Activated CD8-positive, alpha-beta memory T cell treated with anti-CD3 and anti-CD28 coated beads, Interleukin-2, amount 10 ng/mL, durations not matched to agents 7 days and 5 days (primary cell): ENCODE measurements at regions of chr6 and their contacts with region 1.

Region 1: DNA sequence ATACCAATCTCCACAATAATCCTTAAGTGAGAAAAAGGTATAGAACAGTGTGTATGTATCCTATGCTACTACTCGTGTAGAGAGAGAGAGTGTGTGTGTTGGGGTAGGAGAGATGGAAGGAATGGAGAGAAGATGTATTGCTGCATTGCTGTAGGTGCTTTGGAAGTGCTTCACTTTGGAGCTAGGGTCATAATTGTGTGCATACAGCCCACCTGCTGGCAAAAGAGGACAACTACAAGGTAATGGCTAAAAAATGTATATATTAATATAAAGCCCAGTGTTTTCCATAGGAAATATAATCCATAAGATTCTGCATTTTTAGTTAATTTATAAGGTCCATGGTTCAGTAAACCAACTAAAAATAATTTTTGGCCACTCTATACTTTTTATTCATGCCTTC is 36.1 kb downstream of the SERAC1 start:
- DNase-seq: peak; percentile 45
- ATAC-seq: peak; percentile 68
- H3K4me3 Mint-ChIP-seq: no peak overlapping the region
- H3K27ac Mint-ChIP-seq: no peak overlapping the region
- H3K4me1 Mint-ChIP-seq: no peaks in the 10 kb centered on the region
- H3K27me3 Mint-ChIP-seq: no peaks in the 10 kb centered on the region

Region 2: GRCh38 chr6:158143700-158144099 is 11.8 kb after region 1 on chr6:
- CTCF ChIA-PET with region 1: interaction called, 18 read pairs
- DNase-seq: no peak
- ATAC-seq: peak; percentile 49
- H3K4me3 Mint-ChIP-seq: no peak overlapping the region
- H3K27ac Mint-ChIP-seq: no peak overlapping the region
- H3K4me1 Mint-ChIP-seq: peaks cover 2% of the 10 kb centered on the region
- H3K27me3 Mint-ChIP-seq: no peaks in the 10 kb centered on the region